H1 (cell line): ENCODE measurements at regions of chr20 and their contacts with region 1.

Region 1: DNA sequence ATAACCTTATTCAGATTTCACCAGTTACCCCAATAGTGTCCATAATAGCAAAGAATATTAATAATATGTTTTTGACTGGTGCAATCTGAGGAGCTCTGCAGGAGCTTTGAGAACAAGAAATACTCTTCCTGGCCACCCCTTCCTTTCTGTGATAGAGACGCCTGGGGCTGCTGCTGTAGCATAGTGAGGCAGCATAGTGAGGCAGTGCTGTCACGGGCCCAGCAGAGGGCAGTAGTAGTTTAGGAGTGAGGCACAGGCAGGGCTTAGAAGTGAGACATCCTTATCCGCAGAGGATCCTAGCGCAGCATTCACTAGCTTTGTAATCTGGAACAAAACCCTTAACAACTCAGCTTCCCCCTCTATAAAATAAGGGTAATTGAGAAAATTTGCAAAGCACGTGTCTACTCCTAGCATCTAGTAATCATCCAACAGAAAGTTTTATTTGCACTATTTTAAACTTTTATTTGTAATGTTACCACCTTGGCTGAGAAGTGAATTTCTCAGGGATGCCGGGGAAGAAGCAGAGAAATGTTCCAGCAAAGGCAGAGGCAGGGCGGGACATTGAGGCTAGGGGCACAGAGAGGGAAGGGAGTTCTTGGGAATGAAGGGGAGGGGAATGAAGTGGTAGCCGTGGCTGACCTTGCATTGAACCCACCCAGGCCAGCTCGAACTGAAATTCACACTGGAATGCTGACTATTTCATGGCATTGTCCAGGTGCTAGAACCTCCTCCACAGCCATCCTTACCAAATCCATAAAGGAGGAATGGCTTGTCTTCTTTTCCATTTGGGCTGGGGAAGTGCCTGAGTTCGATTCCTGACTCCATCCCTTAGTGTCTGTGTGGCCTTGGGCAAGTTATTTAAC is 78.8 kb downstream of the CDS2 start:
- DNase-seq: peak; percentile 53 to 86
- H3K4me3 ChIP-seq: no peak overlapping the region
- H3K27ac ChIP-seq: no peak overlapping the region
- H3K4me1 ChIP-seq: peaks cover 0 to 2% (median 0%) of the 10 kb centered on the region in 4 experiments; a peak in 1 of 7 replicates
- H3K27me3 ChIP-seq: no peaks in the 10 kb centered on the region
- CTCF ChIP-seq: peak; percentile 94 to 97 (median 97)
- EP300 ChIP-seq: no peak
- POLR2A ChIP-seq: no peak
- RAD21 ChIP-seq: peak; percentile 95 to 97

Region 2: DNA sequence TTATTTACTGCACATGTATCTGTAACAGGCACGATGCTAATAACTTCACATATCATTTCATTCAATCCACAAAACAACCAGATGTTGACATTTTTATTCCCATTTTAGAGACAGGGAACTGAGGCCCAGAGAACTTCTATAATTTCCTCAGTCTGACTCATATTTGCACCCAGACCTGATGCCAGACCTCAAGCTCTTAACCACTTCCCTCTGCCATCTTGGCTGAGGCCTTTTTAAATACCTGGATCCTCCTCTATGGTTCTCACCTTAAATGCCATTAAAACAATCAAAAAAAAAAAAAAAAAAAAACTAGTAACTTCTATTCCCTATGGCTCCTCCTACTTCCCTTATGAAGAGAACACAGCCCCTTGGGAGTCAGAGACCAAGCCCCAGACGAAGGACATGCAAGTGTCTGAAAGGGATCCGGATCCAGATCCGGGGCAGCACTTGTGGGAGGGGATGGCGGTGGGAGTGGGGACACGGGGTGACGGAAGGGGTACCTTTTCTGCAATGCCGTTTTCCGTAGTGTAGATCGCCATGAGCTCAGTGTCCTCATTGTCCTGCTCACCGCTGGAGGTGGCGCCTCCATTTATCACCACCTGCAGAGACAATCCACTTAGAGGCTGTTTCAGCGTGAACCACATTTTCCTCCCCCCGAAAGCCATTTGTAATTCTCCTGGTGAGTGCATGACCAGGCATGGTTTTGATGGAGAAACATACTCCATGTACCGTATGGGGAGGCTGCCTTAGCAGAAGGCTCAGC is 293.0 kb before region 1 on chr20:
- CTCF ChIA-PET with region 1: no interaction called
- POLR2A ChIA-PET with region 1: no interaction called
- DNase-seq: no peak
- H3K4me3 ChIP-seq: no peak overlapping the region
- H3K27ac ChIP-seq: no peak overlapping the region
- H3K4me1 ChIP-seq: peaks cover 0 to 4% (median 1%) of the 10 kb centered on the region in 4 experiments; a peak in 2 of 7 replicates
- H3K27me3 ChIP-seq: no peaks in the 10 kb centered on the region
- CTCF ChIP-seq: no peak
- EP300 ChIP-seq: no peak
- POLR2A ChIP-seq: no peak
- RAD21 ChIP-seq: no peak

Region 3: DNA sequence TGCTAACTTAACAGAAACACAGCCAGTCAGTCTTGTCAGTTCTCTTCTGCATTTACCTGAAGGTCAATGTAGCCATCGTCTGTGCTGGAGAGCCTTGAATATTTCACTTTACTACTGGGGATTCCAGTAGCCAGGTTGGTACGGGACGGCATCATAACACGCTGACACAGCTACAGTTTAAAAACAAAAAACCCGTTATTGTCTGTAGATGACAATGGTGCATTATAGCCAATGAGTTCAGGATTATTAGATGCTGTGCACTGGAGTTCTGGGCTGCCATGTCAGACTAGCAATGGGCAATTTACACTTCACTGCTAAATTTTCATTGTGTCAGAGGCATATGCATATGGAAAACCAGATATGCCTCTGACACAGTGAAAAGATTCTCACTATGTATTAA is 96.3 kb before region 1 on chr20:
- CTCF ChIA-PET with region 1: no interaction called
- POLR2A ChIA-PET with region 1: no interaction called
- DNase-seq: no peak
- H3K4me3 ChIP-seq: no peak overlapping the region
- H3K27ac ChIP-seq: no peak overlapping the region
- H3K4me1 ChIP-seq: no peaks in the 10 kb centered on the region
- H3K27me3 ChIP-seq: no peaks in the 10 kb centered on the region
- CTCF ChIP-seq: no peak
- EP300 ChIP-seq: no peak
- POLR2A ChIP-seq: no peak
- RAD21 ChIP-seq: no peak

Region 4: DNA sequence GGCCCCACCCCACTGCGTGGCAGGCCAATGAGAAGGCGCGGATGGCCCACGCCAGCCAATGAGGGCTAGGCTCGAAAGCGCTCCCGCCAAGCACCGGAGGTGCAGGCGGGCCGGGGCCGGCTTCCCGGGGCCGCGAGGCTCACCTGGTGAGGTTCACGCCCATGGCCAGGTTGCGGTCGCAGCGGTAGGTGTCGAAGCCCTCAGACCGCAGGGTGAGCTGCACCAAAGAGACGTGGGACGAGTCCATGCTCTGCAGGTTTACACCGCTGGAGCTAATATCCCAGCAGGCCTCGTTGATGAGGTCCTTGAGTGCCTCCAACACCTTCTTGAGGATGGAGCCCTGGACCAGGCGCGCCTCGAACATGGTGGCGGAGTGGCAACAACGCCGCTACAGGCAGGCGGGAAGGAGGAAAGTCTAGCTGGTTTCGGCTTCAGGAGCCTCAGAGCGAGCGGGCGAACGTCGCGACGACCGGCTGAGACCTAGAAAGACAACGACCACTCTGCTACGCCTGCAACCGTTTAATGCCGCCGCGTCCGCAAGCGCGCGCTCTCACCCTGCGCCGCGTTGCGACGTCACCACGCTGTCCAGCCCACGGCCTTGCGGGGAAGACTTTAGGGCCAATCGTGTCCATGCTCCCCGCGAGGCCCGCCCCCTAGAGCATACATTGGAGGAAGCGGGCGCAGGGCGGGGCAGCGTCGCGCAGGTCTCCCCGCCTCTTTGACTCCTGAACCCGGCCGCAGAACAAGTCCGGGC is 86.0 kb before region 1 on chr20 and contains the start of gene PCNA:
- CTCF ChIA-PET with region 1: no interaction called
- POLR2A ChIA-PET with region 1: interaction called, 10 read pairs
- DNase-seq: peak; percentile 92 to 93
- H3K4me3 ChIP-seq: peak within 1 kb of the TSS; percentile 91 to 99 (median 96)
- H3K27ac ChIP-seq: peak within 1 kb of the TSS; percentile 99
- H3K4me1 ChIP-seq: peaks cover 0 to 1% (median 0%) of the 10 kb centered on the region in 4 experiments; a peak in 1 of 7 replicates
- H3K27me3 ChIP-seq: no peaks in the 10 kb centered on the region
- CTCF ChIP-seq: no peak
- EP300 ChIP-seq: no peak
- POLR2A ChIP-seq: peak; percentile 99 to 100
- RAD21 ChIP-seq: no peak
- total RNA-seq, gene PCNA: 286 and 290 TPM in 2 replicates

Region 5: GRCh38 chr20:5297280-5298004 is 91.9 kb after region 1 on chr20:
- CTCF ChIA-PET with region 1: interaction called, 13 read pairs
- POLR2A ChIA-PET with region 1: no interaction called
- DNase-seq: no peak
- H3K4me3 ChIP-seq: no peak overlapping the region
- H3K27ac ChIP-seq: no peak overlapping the region
- H3K4me1 ChIP-seq: no peaks in the 10 kb centered on the region; a peak in 1 of 7 replicates
- H3K27me3 ChIP-seq: no peaks in the 10 kb centered on the region; a peak in 1 of 7 replicates
- CTCF ChIP-seq: no peak
- EP300 ChIP-seq: no peak
- POLR2A ChIP-seq: no peak
- RAD21 ChIP-seq: no peak

Region 6: DNA sequence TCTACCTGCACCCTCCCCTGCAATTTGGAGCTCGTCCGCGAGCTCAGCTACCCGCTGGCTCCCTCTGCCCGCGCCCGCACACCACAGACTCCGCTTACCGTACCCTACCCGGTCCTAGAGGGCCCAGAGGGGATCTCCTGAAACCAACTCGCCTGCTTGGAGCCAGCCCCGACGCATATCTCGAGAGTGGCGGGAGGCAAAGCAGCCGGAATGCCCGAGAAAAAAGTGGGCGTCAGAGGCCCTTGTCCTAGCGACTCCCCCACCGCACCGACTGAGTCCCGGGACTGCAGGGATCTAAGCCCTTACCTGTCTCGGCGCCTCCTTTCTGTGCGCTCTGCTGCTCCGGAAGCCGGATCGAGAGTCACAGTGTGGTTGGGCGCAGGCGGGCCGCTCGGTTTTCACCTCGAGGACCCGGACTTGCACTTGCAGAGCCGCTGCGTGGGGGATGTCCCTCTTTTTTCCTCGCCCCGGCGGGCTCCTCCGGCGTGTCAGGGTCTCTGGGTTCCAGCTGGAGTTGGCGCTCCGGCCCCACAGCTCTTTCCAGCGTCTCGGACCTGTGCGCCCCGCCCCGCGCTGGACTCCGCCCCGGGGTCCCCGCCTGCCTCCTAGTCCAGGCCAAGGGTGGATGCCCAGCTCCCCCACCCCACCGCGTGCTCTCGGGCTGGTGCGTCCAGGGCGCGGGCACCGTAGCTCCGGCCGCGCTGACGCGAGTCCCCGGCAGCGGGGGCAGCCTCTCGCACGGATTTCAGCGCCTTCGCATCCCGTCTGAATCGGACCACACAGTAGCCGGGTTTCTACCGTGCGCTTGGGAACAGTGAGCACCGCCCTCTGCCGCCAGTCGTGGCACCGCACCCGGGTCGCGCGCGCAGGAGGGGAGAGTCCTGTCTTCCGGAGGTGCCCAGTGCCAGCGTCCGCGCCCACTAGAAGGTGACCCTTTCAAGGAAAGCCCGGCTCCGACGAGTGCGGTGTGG is 110.9 kb after region 1 on chr20 and contains the start of gene PROKR2:
- CTCF ChIA-PET with region 1: interaction called, 15 read pairs
- POLR2A ChIA-PET with region 1: no interaction called
- DNase-seq: peak; percentile 17 to 88
- H3K4me3 ChIP-seq: peak within 1 kb of the TSS; percentile 60 to 79 (median 74)
- H3K27ac ChIP-seq: no peak within 1 kb of the TSS
- H3K4me1 ChIP-seq: peaks cover 0 to 6% (median under 1%) of the 10 kb centered on the region in 4 experiments; a peak in 2 of 7 replicates
- H3K27me3 ChIP-seq: peaks cover 12 to 42% (median 34%) of the 10 kb centered on the region in 4 experiments
- CTCF ChIP-seq: peak; percentile 47 to 72 (median 65)
- EP300 ChIP-seq: no peak
- POLR2A ChIP-seq: no peak; a peak in 1 of 3 replicates
- RAD21 ChIP-seq: peak; percentile 46 to 66
- total RNA-seq, gene PROKR2: 2.6 and 3.3 TPM in 2 replicates

Region 7: GRCh38 chr20:5402903-5403531 is 197.4 kb after region 1 on chr20:
- CTCF ChIA-PET with region 1: interaction called, 19 read pairs
- POLR2A ChIA-PET with region 1: no interaction called
- DNase-seq: peak in 1 of 2 experiments; percentile 74
- H3K4me3 ChIP-seq: no peak overlapping the region
- H3K27ac ChIP-seq: no peak overlapping the region
- H3K4me1 ChIP-seq: no peaks in the 10 kb centered on the region
- H3K27me3 ChIP-seq: no peaks in the 10 kb centered on the region
- CTCF ChIP-seq: peak; percentile 74 to 78 (median 75)
- EP300 ChIP-seq: no peak
- POLR2A ChIP-seq: no peak
- RAD21 ChIP-seq: peak; percentile 62 to 73

Region 8: DNA sequence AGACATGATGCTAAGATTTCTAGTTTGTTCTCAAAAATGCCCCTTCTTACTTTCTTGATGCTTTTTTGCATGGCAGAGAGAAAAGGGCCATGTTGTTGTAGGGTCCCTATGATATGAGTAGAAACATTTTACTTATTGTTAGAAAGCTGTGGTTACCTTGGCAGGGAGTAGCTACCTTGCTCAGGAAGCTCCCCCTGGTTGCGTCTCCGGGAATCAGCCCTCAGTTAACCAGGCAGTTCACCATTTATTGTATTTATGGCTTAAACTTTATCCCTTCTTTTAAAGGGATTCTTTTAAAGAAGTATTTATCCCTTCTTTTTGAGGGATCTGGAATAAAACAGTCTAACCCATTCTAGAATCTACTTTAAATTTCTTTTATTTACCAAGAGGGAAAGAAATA is 225.1 kb after region 1 on chr20:
- CTCF ChIA-PET with region 1: interaction called, 13 read pairs
- POLR2A ChIA-PET with region 1: no interaction called
- DNase-seq: no peak
- H3K4me3 ChIP-seq: no peak overlapping the region
- H3K27ac ChIP-seq: no peak overlapping the region
- H3K4me1 ChIP-seq: no peaks in the 10 kb centered on the region
- H3K27me3 ChIP-seq: peaks cover 0 to 2% (median 0%) of the 10 kb centered on the region in 4 experiments; a peak in 1 of 7 replicates
- CTCF ChIP-seq: peak; percentile 39 to 49 (median 40)
- EP300 ChIP-seq: no peak
- POLR2A ChIP-seq: no peak
- RAD21 ChIP-seq: peak; percentile 34 to 40; a peak in 3 of 4 replicates

Region 9: DNA sequence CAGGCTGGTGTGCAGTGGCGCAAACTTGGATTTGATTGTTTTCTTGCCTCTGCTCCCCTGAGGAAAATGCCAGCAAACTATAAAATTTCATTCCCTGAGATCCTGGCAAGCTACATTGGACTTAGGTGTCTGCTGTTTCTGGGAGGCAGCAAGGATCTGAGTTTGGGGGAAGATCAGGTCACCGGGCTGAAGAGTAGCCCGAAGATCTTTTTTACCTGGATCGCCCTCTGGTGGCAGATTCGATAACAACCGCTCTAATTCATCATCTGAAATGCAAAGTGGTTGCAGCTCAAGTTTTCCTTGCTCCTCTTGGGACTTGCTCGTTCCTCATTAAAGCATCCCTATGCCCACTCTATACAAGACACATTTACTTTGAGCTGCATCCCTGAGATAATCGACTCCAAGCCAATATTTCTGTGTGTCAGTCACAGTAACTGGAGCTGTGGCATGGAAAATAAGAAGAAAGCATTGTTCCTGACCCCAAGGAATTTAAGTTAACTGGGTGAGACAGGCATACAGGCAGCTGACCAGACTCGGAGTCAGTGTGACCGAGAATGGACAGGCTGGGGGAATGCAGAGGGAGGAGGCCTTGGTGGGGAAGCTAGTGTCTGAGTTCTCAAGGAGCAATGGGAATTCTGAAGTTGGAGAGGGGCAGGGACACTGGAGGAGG is 243.0 kb after region 1 on chr20:
- CTCF ChIA-PET with region 1: interaction called, 72 read pairs
- POLR2A ChIA-PET with region 1: no interaction called
- DNase-seq: peak; percentile 36 to 90
- H3K4me3 ChIP-seq: no peak overlapping the region; a peak in 1 of 8 replicates
- H3K27ac ChIP-seq: no peak overlapping the region
- H3K4me1 ChIP-seq: no peaks in the 10 kb centered on the region
- H3K27me3 ChIP-seq: no peaks in the 10 kb centered on the region
- CTCF ChIP-seq: peak; percentile 30 to 78 (median 71)
- EP300 ChIP-seq: no peak
- POLR2A ChIP-seq: no peak
- RAD21 ChIP-seq: peak; percentile 73 to 77